Heart left ventricle (tissue), 16 donors: ENCODE measurements at regions of chr20 and their contacts with region 1.

Region 1: GRCh38 chr20:62386383-62387218 is at the start of gene RPS21:
- DNase-seq: peak; percentile 94 to 97 (median 95)
- ATAC-seq: peak; percentile 84 to 95 (median 94)
- H3K4me3 ChIP-seq: peak within 1 kb of the TSS; percentile 57 to 100 (median 93)
- H3K27ac ChIP-seq: peak within 1 kb of the TSS; percentile 88 to 98 (median 93)
- H3K4me1 ChIP-seq: peaks cover 8 to 37% (median 29%) of the 10 kb centered on the region in 12 donors
- H3K27me3 ChIP-seq: no peaks in the 10 kb centered on the region
- CTCF ChIP-seq: peak in 1 of 12 donors; percentile 20
- POLR2A ChIP-seq: peak in 1 of 2 donors; percentile 86
- total RNA-seq, gene RPS21: 434 to 831 (median 670) TPM

Region 2: GRCh38 chr20:62025832-62026563 is 360.6 kb before region 1 on chr20:
- intact Hi-C with region 1: loop called in 1 of 10 experiments (anchors 10 kb)
- DNase-seq: peak in 4 of 5 donors; percentile 39 to 54 (median 44)
- ATAC-seq: peak; percentile 60 to 87 (median 74)
- H3K4me3 ChIP-seq: peak overlapping the region in 1 of 12 donors; percentile 13
- H3K27ac ChIP-seq: peak overlapping the region in 6 of 12 donors; percentile 10 to 47 (median 20)
- H3K4me1 ChIP-seq: peaks cover 8 to 50% (median 30%) of the 10 kb centered on the region in 12 donors
- H3K27me3 ChIP-seq: no peaks in the 10 kb centered on the region
- CTCF ChIP-seq: peak; percentile 29 to 75 (median 64)
- POLR2A ChIP-seq: no peak

Region 3: DNA sequence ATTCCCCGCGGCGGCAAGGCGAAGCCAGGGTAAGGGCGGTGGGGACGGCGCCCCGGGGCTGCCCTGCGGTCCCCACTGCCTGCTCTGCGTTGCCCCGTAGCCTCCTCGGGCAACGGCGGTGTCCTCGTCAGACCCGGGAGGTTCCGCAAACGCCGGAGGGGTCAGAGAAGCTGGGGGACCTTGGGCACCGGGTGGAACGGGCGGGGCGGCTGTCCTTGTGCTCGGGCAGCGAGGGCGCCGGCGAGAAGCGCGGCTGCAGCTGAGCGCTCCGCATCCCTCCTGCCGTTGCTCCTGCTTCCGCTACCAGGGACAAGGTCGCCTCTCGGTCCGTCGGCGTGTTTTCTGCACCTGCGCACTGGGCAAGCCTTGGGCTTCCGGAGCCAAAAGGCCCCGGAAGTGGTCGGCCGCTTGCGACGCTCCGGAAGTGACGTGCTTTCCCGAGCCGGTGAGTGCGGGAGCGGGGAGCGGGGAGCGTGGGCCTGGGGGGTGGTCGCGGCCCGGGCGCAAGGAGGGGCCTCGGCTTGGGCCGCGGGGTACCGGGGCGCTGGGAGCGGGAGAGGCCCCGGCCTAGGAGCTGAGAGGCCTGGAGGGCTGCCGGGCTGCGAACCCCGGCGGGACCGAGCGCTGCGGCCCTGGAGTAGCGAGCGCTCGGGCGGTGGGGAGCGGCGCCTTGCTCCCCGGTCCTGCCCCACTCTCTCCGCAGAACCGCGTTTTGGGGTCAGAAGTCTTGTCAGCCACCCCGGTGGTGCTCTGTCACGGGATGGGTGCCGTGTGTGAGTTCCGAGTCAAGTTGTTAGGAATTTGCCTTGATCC is 203.8 kb before region 1 on chr20 and contains the start of gene MTG2:
- intact Hi-C with region 1: loop called in 3 of 10 experiments (anchors 5 to 10 kb)
- DNase-seq: peak; percentile 95 to 98 (median 97)
- ATAC-seq: peak; percentile 94 to 98 (median 98)
- H3K4me3 ChIP-seq: peak within 1 kb of the TSS; percentile 77 to 99 (median 96)
- H3K27ac ChIP-seq: peak within 1 kb of the TSS; percentile 78 to 99 (median 93)
- H3K4me1 ChIP-seq: peaks cover 8 to 35% (median 27%) of the 10 kb centered on the region in 12 donors
- H3K27me3 ChIP-seq: no peaks in the 10 kb centered on the region
- CTCF ChIP-seq: peak in 3 of 12 donors; percentile 4 to 14 (median 7)
- POLR2A ChIP-seq: peak in 1 of 2 donors; percentile 93
- total RNA-seq, gene MTG2: 20.7 to 36.8 (median 26.5) TPM

Region 4: DNA sequence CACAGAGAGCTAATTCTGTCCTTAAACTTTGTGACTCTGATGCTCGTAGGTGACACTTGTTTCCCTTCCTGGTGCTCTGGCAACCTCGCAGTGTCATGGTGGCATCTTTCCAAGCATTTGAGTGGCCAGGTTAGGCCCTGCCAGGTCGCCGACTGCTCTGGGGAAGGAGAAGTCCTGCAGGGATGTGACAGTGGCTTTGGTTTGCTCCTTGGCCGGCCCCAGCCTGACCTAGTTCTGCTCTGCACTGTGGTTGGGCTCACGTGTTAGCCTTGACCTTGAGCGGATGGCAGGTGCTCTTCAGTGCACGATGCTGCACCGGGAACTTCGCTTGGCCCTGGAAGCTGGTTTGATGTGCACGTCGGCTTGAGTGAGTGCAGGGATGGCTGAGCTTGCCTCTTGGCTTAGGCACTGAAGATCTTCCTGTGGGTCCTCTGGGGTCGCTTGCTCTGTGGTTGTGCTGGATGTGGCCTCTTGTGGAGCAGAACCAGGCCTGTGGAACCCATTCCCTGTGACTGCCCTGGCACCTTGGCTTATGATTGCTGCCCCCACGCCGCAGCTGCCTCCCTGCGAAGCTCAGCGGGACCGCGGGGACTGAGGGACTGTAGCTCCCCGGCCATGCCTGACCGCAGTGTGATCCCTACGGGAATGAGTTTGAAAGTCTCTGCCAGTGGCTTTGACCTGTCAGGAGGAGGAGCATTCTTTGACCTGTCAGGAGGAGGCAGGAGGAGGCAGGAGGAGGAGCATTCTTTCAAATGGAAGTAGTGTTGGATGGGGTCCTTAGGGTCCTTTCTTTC is 139.5 kb before region 1 on chr20:
- intact Hi-C with region 1: loop called in 1 of 10 experiments (anchors 5 kb)
- DNase-seq: peak in 4 of 5 donors; percentile 61 to 85 (median 74)
- ATAC-seq: peak; percentile 75 to 88 (median 84)
- H3K4me3 ChIP-seq: no peak overlapping the region
- H3K27ac ChIP-seq: peak overlapping the region in 11 of 12 donors; percentile 24 to 86 (median 62)
- H3K4me1 ChIP-seq: peaks cover 0 to 81% (median 52%) of the 10 kb centered on the region in 12 donors
- H3K27me3 ChIP-seq: no peaks in the 10 kb centered on the region
- CTCF ChIP-seq: no peak
- POLR2A ChIP-seq: no peak

Region 5: GRCh38 chr20:62344782-62345181 is 41.8 kb before region 1 on chr20:
- intact Hi-C with region 1: loop called in 2 of 10 experiments (anchors 5 kb)
- DNase-seq: peak in 1 of 5 donors; percentile 17
- ATAC-seq: no peak
- H3K4me3 ChIP-seq: no peak overlapping the region
- H3K27ac ChIP-seq: peak overlapping the region in 1 of 12 donors; percentile 24
- H3K4me1 ChIP-seq: no peaks in the 10 kb centered on the region
- H3K27me3 ChIP-seq: no peaks in the 10 kb centered on the region
- CTCF ChIP-seq: no peak
- POLR2A ChIP-seq: no peak

Region 6: GRCh38 chr20:62476056-62476838 is 89.6 kb after region 1 on chr20:
- intact Hi-C with region 1: no loop called
- DNase-seq: peak in 4 of 5 donors; percentile 54 to 81 (median 61)
- ATAC-seq: peak in 3 of 4 donors; percentile 38 to 57 (median 57)
- H3K4me3 ChIP-seq: peak overlapping the region; percentile 22 to 63 (median 44)
- H3K27ac ChIP-seq: peak overlapping the region in 1 of 12 donors; percentile 48
- H3K4me1 ChIP-seq: peaks cover 0 to 20% (median 8%) of the 10 kb centered on the region in 12 donors
- H3K27me3 ChIP-seq: peaks cover 26 to 88% (median 54%) of the 10 kb centered on the region in 9 donors
- CTCF ChIP-seq: no peak
- POLR2A ChIP-seq: no peak